Activated T-helper 1 cell treated with anti-CD3 and anti-CD28 coated beads, Interleukin-12 subunit alpha, Interleukin-12 subunit beta, Interleukin-2, Interleukin-4 antibody, amounts not matched to agents 30 ng/mL and 10 ng/mL and 1 ng/mL, durations not matched to agents 14 hours and 24 hours and 36 hours (primary cell): ENCODE measurements at regions of chr14 and their contacts with region 1.

Region 1: GRCh38 chr14:94180655-94181271 is 6.6 kb downstream of the PPP4R4 start:
- DNase-seq: no peak
- H3K4me3 Mint-ChIP-seq: peak overlapping the region; percentile 11
- H3K27ac Mint-ChIP-seq: peak overlapping the region; percentile 51
- H3K4me1 Mint-ChIP-seq: peaks cover 11% of the 10 kb centered on the region
- H3K27me3 Mint-ChIP-seq: peaks cover 30% of the 10 kb centered on the region

Region 2: DNA sequence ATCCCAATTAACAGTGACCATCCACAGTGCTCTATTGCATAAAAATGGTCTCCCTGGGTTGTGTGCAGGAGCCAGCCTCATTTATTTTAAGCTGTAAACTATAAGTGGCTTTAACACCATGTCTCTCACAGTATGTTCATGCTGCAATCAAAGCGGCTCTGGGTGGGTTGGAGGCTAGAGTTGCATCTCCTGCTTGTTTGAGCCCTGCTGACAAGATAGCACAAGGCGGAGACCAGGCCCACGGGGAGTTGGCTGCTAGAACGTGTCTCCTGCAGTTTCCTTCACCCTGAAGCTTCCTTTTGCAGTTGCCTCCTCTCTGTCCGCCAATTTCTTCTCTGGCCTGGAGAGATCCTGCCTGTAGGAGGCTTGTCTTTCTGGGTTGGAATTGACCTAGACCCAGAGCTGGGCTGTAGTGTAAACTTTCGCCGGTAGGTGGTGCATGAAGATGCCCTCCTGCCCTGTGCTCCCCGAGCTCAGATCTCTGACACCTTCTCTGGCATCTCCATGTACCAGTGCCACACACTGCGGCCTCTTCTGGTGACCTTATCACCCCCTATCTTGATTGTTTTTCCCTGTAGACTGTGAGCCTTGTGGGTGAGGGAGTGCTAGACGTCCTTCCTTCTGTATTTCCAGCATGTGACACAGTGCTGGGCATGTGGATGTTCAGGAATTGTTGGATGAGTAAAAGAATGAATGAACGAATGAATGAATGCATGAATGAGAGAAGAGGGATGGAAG is 144.3 kb before region 1 on chr14:
- intact Hi-C with region 1: loop called (anchors 1 kb)
- DNase-seq: peak; percentile 62
- H3K4me3 Mint-ChIP-seq: no peak overlapping the region
- H3K27ac Mint-ChIP-seq: no peak overlapping the region
- H3K4me1 Mint-ChIP-seq: peaks cover 5% of the 10 kb centered on the region
- H3K27me3 Mint-ChIP-seq: no peaks in the 10 kb centered on the region

Region 3: GRCh38 chr14:94056579-94057308 is 124.0 kb before region 1 on chr14:
- intact Hi-C with region 1: loop called (anchors 5 kb)
- DNase-seq: peak; percentile 45
- H3K4me3 Mint-ChIP-seq: peak overlapping the region; percentile 6
- H3K27ac Mint-ChIP-seq: peak overlapping the region; percentile 77
- H3K4me1 Mint-ChIP-seq: peaks cover 70% of the 10 kb centered on the region
- H3K27me3 Mint-ChIP-seq: no peaks in the 10 kb centered on the region

Region 4: GRCh38 chr14:94161981-94162380 is 18.8 kb before region 1 on chr14:
- intact Hi-C with region 1: loop called (anchors 2 kb)
- DNase-seq: no peak
- H3K4me3 Mint-ChIP-seq: no peak overlapping the region
- H3K27ac Mint-ChIP-seq: no peak overlapping the region
- H3K4me1 Mint-ChIP-seq: peaks cover 51% of the 10 kb centered on the region
- H3K27me3 Mint-ChIP-seq: peaks cover 3% of the 10 kb centered on the region